ENCODE measurements at regions of chr14 and their contacts with region 1.

Region 1: GRCh38 chr14:55354500-55354899 is 57.1 kb downstream of the ATG14 start:
- DNase-seq: peak in 1 of 2 donors; percentile 69
- H3K4me3 ChIP-seq: no peak overlapping the region
- H3K27ac ChIP-seq: no peak overlapping the region
- H3K4me1 ChIP-seq: no peaks in the 10 kb centered on the region
- H3K27me3 ChIP-seq: no peaks in the 10 kb centered on the region
- CTCF ChIP-seq: peak in 2 of 3 experiments; percentile 40 to 42

Region 2: GRCh38 chr14:55180434-55180833 is 174.1 kb before region 1 on chr14:
- intact Hi-C with region 1: no loop called
- DNase-seq: no peak
- H3K4me3 ChIP-seq: no peak overlapping the region
- H3K27ac ChIP-seq: no peak overlapping the region
- H3K4me1 ChIP-seq: no peaks in the 10 kb centered on the region
- H3K27me3 ChIP-seq: no peaks in the 10 kb centered on the region
- CTCF ChIP-seq: no peak

Region 3: GRCh38 chr14:55212634-55213033 is 141.9 kb before region 1 on chr14:
- intact Hi-C with region 1: loop called (anchors 5 kb)
- DNase-seq: no peak
- H3K4me3 ChIP-seq: no peak overlapping the region
- H3K27ac ChIP-seq: no peak overlapping the region
- H3K4me1 ChIP-seq: no peaks in the 10 kb centered on the region
- H3K27me3 ChIP-seq: no peaks in the 10 kb centered on the region
- CTCF ChIP-seq: no peak

Region 4: DNA sequence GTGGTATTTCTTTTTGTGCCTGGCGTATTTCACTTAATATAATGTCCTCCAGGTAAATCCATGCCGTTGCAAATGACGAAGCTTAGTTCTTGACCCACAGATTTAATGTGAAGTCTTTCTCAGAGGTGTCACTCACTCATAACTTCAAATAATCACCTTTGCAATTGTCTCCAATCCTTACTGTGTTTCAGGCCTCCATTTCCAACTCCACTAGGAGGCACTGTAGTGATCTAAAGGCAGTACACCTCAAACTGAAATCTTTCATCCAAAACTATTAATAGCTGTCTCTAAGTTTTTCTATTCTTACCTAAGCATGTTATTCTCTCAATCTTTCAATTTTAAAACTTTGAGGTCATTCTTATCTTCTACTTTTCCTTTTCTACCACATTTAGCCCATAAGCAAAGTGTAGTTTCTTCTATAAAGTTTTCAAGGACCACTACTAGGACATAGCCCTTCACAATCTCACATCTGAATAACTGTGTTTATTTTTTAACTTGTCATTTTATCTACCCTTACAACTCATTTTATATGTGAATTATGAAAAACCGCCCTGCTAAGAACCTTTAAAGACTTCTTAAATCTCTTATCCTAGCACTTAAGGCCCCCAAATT is 108.7 kb before region 1 on chr14:
- intact Hi-C with region 1: loop called (anchors 1 kb)
- DNase-seq: no peak
- H3K4me3 ChIP-seq: no peak overlapping the region
- H3K27ac ChIP-seq: peak overlapping the region in 1 of 2 donors; percentile 17
- H3K4me1 ChIP-seq: no peaks in the 10 kb centered on the region
- H3K27me3 ChIP-seq: no peaks in the 10 kb centered on the region
- CTCF ChIP-seq: peak; percentile 40 to 70 (median 52)

Region 5: GRCh38 chr14:55323910-55324309 is 30.6 kb before region 1 on chr14:
- intact Hi-C with region 1: no loop called
- DNase-seq: no peak
- H3K4me3 ChIP-seq: no peak overlapping the region
- H3K27ac ChIP-seq: no peak overlapping the region
- H3K4me1 ChIP-seq: no peaks in the 10 kb centered on the region
- H3K27me3 ChIP-seq: no peaks in the 10 kb centered on the region
- CTCF ChIP-seq: no peak